ENCODE measurements at regions of chr11 and their contacts with region 1.

Region 1: GRCh38 chr11:24386546-24387397 is 110.1 kb upstream of the LUZP2 start:
- DNase-seq: peak; percentile 8
- H3K4me3 ChIP-seq: no peak overlapping the region
- H3K27ac ChIP-seq: no peak overlapping the region
- H3K4me1 ChIP-seq: no peaks in the 10 kb centered on the region
- H3K27me3 ChIP-seq: no peaks in the 10 kb centered on the region
- CTCF ChIP-seq: peak; percentile 19 to 52

Region 2: DNA sequence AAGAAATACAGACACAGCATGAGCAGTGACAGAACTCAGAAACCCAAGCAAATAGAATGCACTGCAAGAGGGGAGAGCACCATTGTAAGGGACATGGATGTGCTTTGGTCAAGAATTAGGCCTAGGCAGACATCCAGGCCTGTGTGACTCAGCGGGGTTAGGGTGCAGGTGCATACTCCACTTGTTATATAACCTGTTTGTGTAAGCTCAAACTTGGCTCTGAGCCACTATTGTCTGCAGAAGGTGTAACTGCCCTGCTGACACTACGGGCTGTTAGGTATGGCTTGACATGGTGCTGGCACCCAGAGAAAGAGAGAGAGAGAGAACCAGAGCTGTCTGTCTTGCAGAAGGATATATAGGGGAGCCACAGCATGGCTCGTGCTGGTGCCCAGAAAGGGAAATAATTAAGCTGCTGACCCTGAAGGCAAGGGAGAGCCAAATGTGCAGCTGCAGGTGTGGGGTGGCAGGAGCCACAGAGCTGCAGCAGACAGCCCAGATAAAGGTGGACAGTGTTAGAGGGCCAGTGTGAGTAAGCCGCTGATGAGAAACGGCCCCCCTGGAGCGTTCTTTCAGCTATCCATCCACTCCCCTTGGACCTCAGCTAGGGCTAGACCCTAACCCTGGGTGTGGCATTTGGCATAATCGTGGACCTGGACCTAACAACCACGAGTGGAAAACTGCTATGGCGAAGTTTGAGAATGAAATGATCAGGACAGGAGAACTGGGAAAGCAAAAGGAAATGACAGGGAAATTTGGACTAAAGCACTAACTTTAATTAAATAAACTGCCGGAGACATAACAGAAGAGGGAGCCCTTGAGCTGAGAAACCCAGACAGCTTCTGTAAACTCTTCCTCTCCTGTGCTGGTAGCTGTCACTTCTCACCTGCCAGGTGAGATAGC is 1273.5 kb before region 1 on chr11:
- CTCF ChIA-PET with region 1: no interaction called
- dilution Hi-C with region 1: no loop called
- in situ Hi-C with region 1: no loop called
- intact Hi-C with region 1: loop called (anchors 10 kb)
- DNase-seq: peak; percentile 41
- H3K4me3 ChIP-seq: no peak overlapping the region
- H3K27ac ChIP-seq: no peak overlapping the region
- H3K4me1 ChIP-seq: no peaks in the 10 kb centered on the region
- H3K27me3 ChIP-seq: no peaks in the 10 kb centered on the region
- CTCF ChIP-seq: peak; percentile 44 to 65

Region 3: GRCh38 chr11:23540101-23540561 is 846.6 kb before region 1 on chr11:
- CTCF ChIA-PET with region 1: no interaction called
- dilution Hi-C with region 1: no loop called
- in situ Hi-C with region 1: loop called in 1 of 2 experiments (anchors 25 kb)
- intact Hi-C with region 1: no loop called
- DNase-seq: peak; percentile 32
- H3K4me3 ChIP-seq: no peak overlapping the region
- H3K27ac ChIP-seq: no peak overlapping the region
- H3K4me1 ChIP-seq: no peaks in the 10 kb centered on the region
- H3K27me3 ChIP-seq: no peaks in the 10 kb centered on the region
- CTCF ChIP-seq: peak; percentile 76 to 85

Region 4: DNA sequence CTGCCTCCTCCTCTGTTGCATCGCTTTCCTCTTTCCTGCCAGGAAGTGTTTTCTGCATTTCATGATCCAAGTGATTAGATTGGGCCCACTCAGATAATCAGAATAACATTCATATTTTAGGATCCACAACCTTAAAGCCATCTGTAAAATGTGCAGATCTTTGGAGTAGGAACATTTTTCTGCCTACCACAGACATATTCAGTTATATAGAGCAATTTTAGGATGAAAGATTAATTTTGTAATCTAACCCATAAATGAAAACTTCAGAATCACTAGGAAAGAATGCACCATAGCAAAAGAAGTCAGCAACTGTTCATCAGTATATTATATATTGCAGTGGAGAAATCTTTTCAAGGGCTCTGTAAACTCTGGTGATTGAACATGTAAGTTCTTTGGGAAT is 549.8 kb before region 1 on chr11:
- CTCF ChIA-PET with region 1: no interaction called
- dilution Hi-C with region 1: no loop called
- in situ Hi-C with region 1: no loop called
- intact Hi-C with region 1: loop called (anchors 10 kb)
- DNase-seq: no peak
- H3K4me3 ChIP-seq: no peak overlapping the region
- H3K27ac ChIP-seq: no peak overlapping the region
- H3K4me1 ChIP-seq: no peaks in the 10 kb centered on the region
- H3K27me3 ChIP-seq: no peaks in the 10 kb centered on the region
- CTCF ChIP-seq: no peak